ENCODE measurements at regions of chr9 and their contacts with region 1.

Region 1: DNA sequence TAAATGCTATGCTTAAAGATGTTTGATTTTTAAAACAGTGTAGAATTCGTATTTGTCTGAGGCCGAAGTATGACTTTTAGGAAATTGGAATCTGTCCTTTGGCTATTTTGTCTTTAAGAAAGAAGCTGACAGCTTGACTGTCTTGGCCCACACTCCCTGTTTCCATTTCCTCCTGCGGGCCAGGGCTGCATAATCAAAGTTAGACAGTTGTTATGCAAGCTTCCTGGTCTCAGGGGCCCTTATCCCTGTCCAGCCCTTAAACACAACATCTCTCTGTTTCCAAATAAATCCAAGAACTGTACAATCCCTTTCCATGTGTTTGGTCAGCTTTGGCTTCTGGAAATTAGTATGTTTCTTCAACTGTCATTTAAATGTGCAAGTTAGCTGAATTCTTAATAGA is 54.6 kb upstream of the ECM2 start:
- DNase-seq: peak; percentile 82
- H3K4me3 ChIP-seq: no peak overlapping the region
- H3K27ac ChIP-seq: peak overlapping the region; percentile 18 to 29
- H3K4me1 ChIP-seq: peaks cover 0 to 46% (median 24%) of the 10 kb centered on the region in 4 donors
- H3K27me3 ChIP-seq: no peaks in the 10 kb centered on the region
- CTCF ChIP-seq: no peak

Region 2: GRCh38 chr9:92385953-92386352 is 204.4 kb before region 1 on chr9:
- intact Hi-C with region 1: no loop called
- DNase-seq: no peak
- H3K4me3 ChIP-seq: no peak overlapping the region
- H3K27ac ChIP-seq: peak overlapping the region; percentile 61 to 68
- H3K4me1 ChIP-seq: peaks cover 0 to 34% (median 0%) of the 10 kb centered on the region in 4 donors
- H3K27me3 ChIP-seq: no peaks in the 10 kb centered on the region
- CTCF ChIP-seq: no peak

Region 3: DNA sequence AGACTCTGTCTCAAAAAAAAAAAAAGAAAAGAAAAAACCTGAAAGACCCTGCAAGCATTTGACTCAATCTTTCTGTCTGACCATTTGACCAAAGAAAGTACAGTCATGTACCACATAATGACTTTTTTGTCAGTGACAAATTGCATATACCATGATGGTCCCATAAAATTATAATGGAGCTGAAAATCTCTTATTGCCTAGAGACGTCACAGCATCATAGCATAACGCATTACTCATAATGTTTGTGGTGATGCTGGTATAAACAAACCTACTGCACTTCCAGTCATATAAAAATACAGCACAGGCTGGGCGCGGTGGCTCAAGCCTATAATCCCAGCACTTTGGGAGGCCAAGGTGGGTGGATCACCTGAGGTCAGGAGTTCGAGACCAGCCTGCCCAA is 65.1 kb before region 1 on chr9:
- intact Hi-C with region 1: no loop called
- DNase-seq: no peak
- H3K4me3 ChIP-seq: no peak overlapping the region
- H3K27ac ChIP-seq: no peak overlapping the region
- H3K4me1 ChIP-seq: peaks cover 0 to 10% (median 1%) of the 10 kb centered on the region in 4 donors
- H3K27me3 ChIP-seq: no peaks in the 10 kb centered on the region
- CTCF ChIP-seq: no peak

Region 4: DNA sequence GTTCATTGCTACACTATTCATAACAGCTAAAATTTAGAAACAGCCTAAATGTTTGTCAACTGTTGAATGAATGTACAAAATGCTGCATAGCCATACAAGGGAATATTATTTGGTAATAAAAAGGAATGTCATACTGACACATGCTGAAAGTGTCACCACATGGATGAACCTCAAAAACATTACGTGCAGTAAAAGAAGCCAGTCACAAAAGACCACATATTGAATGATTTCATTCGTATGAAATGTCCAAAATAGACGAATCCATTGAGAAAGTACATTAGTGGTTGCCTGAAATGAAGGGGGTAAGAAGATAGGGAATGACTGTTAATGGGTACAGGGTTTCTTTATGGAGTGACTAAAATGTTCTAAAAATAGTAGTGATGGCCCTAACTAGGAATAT is 43.0 kb before region 1 on chr9:
- intact Hi-C with region 1: loop called (anchors 10 kb)
- DNase-seq: no peak
- H3K4me3 ChIP-seq: no peak overlapping the region
- H3K27ac ChIP-seq: no peak overlapping the region
- H3K4me1 ChIP-seq: no peaks in the 10 kb centered on the region
- H3K27me3 ChIP-seq: no peaks in the 10 kb centered on the region
- CTCF ChIP-seq: no peak

Region 5: DNA sequence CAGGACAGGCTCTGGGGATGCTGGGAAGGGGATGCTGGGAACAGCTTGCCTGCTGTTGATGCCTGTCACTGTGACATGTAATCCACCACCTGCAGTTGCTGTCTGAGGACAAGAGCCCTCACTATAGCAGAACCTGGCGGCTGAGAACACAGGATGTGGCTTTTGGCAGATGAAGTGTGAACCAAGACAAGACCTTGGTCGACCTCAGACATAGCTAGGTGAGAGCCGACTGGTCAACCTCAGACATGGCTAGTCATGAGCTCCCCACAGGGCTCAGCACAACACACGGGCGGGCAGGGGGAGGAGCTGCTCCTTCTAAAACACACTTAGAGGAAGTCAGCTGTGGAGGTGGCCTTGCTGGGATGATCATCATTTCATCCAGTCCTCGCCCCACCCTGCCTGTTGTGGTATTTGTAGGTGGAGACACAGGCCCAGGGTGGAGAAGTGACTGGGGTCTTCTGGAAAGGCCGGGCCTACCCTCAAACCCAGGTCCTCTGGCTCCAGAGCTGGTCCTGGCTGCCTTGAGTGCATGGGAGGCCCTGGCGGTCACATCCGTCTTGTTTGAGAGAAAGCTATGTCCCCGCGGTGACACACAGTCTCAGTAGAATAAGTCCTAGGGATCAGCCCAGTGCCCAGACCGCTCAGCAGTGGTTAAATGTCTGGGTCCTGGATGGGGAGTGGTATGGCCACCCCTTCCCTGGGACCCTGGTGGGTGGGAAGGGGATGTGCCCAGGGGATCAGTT is 474.2 kb after region 1 on chr9:
- intact Hi-C with region 1: no loop called
- DNase-seq: no peak
- H3K4me3 ChIP-seq: no peak overlapping the region
- H3K27ac ChIP-seq: no peak overlapping the region
- H3K4me1 ChIP-seq: peaks cover 0 to 22% (median 17%) of the 10 kb centered on the region in 4 donors
- H3K27me3 ChIP-seq: no peaks in the 10 kb centered on the region
- CTCF ChIP-seq: no peak